Common myeloid progenitor, CD34-positive (primary cell): ENCODE measurements at regions of chr10 and their contacts with region 1.

Region 1: DNA sequence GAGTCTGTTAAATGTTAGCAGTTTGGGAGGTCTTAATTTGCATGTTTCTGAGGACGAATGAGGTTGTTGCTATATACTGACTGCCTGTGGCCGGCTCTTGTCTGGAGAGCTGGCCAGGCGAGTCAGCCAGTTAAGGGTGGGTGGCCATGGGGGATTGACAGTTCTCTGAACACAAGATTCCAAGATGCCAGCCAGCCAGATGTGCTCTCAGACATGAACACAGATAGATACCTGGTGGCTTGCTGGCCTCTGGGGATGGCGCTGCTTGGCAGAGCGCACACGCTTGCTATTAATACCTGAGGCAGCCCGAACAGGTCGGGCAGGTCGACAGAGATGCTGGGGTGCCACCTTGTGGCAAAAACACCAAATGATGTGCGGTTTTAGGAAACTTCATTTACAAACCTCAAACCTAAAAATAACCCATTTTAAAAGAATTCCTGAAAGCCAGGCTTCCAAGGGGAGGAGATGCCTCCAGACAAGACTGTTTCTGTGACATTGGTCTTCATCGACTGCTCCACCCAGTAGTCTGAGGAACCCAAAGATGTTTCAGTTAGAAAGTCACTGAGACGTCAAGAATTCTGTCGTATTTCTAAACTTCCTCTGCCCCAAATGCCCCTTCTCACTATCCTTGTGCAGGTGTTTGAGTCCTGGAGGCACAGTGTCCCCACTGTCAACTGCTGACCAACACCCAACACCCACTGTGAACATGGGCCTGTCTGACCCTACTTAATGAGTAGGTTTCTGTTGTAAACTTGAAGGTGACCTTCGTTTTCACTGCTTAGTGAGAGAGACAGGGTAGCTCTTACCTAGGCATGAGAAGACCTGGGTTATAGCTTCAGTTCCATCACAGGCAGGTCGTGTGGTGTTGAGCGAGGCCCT is 123.4 kb downstream of the NT5C2 start:
- DNase-seq: peak; percentile 64 to 83 (median 79)
- H3K4me3 ChIP-seq: peak overlapping the region in 2 of 7 experiments; percentile 3 to 25
- H3K27ac ChIP-seq: no peak overlapping the region
- H3K4me1 ChIP-seq: peaks cover 6 to 18% (median 17%) of the 10 kb centered on the region in 4 experiments
- H3K27me3 ChIP-seq: no peaks in the 10 kb centered on the region

Region 2: DNA sequence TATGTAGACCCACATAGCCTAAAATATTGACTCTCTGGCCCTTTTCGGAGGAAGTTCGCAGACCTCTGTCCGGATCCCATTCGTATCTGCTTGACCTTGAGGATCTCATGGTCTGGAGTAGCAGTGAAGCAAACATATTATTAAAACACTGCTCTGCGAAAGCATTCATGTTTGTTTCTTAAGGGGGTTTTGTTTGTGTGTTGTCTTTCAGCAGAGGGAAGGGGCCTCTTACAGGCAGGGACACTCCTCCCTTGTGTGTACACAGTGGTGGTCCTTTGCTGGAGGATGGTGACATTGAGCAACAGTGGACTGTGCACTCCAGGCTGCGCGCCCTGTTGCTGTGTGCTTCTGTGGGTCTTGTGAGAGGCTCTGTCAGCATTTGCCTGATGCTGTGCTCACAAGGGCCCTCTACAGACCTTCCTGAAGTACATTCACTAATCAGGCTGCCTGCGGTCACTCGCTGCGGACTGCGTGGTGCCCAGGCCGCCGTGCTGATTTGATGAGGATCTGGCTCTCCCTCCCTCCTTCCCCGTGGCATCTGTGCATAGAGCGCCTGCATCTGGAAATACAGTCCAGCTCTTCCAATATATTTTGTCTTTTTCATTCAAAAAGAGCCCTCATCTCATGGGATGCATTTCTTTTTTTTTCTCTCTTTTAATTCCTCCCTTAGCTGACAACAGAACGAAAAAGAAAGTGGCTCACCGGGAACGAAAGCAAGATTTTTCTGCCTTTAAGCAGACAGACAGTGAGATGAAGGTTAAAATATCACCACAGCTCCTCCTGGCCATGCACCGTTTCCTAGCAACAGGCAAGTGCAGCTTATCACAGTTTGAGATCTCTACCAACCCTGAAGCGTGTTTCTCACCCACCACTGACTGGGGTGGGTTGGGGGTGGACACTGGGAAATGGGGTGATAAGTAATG is 15.8 kb before region 1 on chr10:
- CTCF ChIA-PET with region 1: interaction called, 10 read pairs
- POLR2A ChIA-PET with region 1: no interaction called
- DNase-seq: peak; percentile 38 to 74 (median 67)
- H3K4me3 ChIP-seq: peak overlapping the region in 6 of 7 experiments; percentile 37 to 71 (median 56)
- H3K27ac ChIP-seq: no peak overlapping the region
- H3K4me1 ChIP-seq: peaks cover 0 to 8% (median 5%) of the 10 kb centered on the region in 4 experiments
- H3K27me3 ChIP-seq: no peaks in the 10 kb centered on the region

Region 3: DNA sequence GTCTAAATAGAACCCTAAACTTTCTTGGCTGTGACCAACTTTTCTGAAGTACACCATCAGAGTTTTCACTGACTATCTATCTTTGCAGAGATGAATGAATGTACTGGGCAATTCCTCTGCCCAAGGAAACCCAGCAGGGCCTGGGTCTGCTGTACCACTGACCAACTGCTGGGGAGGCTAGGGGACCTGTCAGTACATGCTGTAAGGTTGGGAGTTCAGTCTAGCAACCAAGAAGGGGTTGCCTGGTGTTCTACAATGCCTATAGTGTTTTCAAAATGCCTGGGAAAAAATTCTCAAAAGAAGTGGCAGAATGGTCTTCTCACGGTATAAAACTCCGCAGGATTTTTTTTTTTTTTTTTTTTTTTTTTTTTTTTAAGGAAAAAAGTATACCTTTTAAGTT is 17.1 kb after region 1 on chr10:
- CTCF ChIA-PET with region 1: no interaction called
- POLR2A ChIA-PET with region 1: no interaction called
- DNase-seq: no peak
- H3K4me3 ChIP-seq: no peak overlapping the region
- H3K27ac ChIP-seq: no peak overlapping the region
- H3K4me1 ChIP-seq: no peaks in the 10 kb centered on the region
- H3K27me3 ChIP-seq: no peaks in the 10 kb centered on the region